ENCODE measurements at regions of chr1 and their contacts with region 1.

Region 1: GRCh38 chr1:160006312-160006940 is 25.4 kb downstream of the PIGM start:
- ATAC-seq: peak; percentile 60 to 92 (median 76)
- H3K4me3 ChIP-seq: no peak overlapping the region
- H3K27ac ChIP-seq: no peak overlapping the region
- H3K4me1 ChIP-seq: peaks cover 16 to 22% of the 10 kb centered on the region in 2 donors

Region 2: DNA sequence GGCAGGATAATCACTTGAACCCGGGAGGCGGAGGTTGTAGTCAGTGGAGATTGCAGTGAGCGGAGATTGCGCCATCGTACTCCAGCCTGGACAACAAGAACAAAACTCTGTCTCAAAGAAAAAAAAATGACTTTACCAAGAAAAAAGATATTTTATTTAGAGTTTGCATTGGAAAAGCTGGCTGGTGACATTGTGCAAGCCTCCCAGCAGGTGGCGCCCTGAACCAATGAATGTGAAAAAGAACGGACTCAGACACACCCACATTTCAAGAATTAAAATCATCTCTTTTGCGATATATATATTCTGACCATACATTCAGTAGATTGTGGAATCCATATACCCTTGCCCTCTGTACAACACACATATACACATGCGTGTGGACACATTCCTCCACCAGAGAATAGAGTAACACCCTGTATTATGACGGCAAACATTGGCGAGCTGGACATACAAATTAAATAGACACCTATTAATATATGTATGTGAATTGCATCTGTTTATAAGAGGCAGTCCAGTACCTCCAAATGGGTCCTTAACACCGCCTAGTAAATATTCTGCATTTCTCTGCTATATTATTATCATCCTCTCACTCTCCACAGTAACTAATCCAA is 874.0 kb before region 1 on chr1:
- in situ Hi-C with region 1: loop called in 1 of 9 experiments (anchors 25 kb)
- ATAC-seq: peak in 6 of 8 experiments; percentile 26 to 56 (median 52)
- H3K4me3 ChIP-seq: no peak overlapping the region
- H3K27ac ChIP-seq: no peak overlapping the region
- H3K4me1 ChIP-seq: no peaks in the 10 kb centered on the region

Region 3: GRCh38 chr1:159936273-159936904 is 70.0 kb before region 1 on chr1:
- in situ Hi-C with region 1: loop called in 2 of 9 experiments (anchors 5 to 10 kb)
- ATAC-seq: peak; percentile 13 to 86 (median 34)
- H3K4me3 ChIP-seq: no peak overlapping the region
- H3K27ac ChIP-seq: peak overlapping the region in 1 of 2 donors; percentile 67
- H3K4me1 ChIP-seq: peaks cover 28 to 30% of the 10 kb centered on the region in 2 donors

Region 4: DNA sequence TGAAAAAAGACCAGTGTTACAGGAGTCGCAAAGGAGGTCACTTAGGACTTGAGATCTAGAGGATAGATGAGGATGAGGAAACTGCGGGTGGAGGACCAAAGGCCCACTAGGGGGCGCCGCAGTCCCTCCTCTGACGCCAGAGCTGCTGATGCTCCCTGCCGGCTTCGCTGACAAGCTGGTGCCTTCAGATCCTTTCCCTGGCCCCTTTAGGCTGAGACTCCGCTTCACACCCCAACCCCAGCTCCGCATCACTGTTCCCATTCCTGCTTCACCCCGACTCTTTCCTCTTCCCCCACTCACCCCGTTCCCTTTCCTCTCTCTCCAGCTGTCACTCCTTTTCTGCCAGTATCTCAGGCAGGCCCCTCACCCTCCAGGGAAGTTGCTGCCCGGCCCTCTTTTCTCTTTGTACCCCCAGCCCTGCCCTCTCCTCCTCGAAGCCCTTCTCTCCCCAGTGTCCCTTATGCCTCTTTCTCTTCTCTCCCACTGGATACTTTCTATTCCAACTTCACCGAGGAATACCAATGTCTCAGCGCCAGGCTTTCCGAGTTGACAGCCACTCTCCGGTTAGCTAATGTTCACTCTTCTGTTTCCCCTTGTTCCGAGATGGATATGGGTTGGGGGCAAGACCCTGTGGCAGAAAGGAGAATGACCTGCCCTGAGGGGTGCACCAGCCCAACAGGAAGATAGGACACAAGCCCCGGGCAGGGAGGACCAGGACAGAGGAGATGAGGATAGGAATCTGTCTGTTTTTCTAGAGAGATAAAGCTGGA is 79.4 kb after region 1 on chr1:
- in situ Hi-C with region 1: no loop called
- ATAC-seq: peak; percentile 49 to 92 (median 58)
- H3K4me3 ChIP-seq: no peak overlapping the region
- H3K27ac ChIP-seq: no peak overlapping the region
- H3K4me1 ChIP-seq: peaks cover 13 to 15% of the 10 kb centered on the region in 2 donors

Measured in motor neuron (in vitro differentiated cells).